Right cardiac atrium (tissue), 5 donors: ENCODE measurements at regions of chr18 and their contacts with region 1.

Region 1: GRCh38 chr18:47531717-47532116 is 280.3 kb upstream of the SKOR2 start:
- DNase-seq: no peak
- ATAC-seq: no peak
- H3K4me3 ChIP-seq: no peak overlapping the region
- H3K27ac ChIP-seq: no peak overlapping the region
- H3K4me1 ChIP-seq: no peaks in the 10 kb centered on the region
- H3K27me3 ChIP-seq: peaks cover 2% of the 10 kb centered on the region

Region 2: GRCh38 chr18:47418746-47419145 is 113.0 kb before region 1 on chr18:
- intact Hi-C with region 1: loop called in 1 of 4 experiments (anchors 10 kb)
- DNase-seq: no peak
- ATAC-seq: no peak
- H3K4me3 ChIP-seq: no peak overlapping the region
- H3K27ac ChIP-seq: no peak overlapping the region
- H3K4me1 ChIP-seq: no peaks in the 10 kb centered on the region
- H3K27me3 ChIP-seq: no peaks in the 10 kb centered on the region

Region 3: GRCh38 chr18:47490882-47491281 is 40.8 kb before region 1 on chr18:
- intact Hi-C with region 1: no loop called
- DNase-seq: no peak
- ATAC-seq: peak; percentile 73 to 79
- H3K4me3 ChIP-seq: no peak overlapping the region
- H3K27ac ChIP-seq: no peak overlapping the region
- H3K4me1 ChIP-seq: peaks cover 2% of the 10 kb centered on the region
- H3K27me3 ChIP-seq: no peaks in the 10 kb centered on the region